ENCODE measurements at regions of chr4 and their contacts with region 1.

Region 1: DNA sequence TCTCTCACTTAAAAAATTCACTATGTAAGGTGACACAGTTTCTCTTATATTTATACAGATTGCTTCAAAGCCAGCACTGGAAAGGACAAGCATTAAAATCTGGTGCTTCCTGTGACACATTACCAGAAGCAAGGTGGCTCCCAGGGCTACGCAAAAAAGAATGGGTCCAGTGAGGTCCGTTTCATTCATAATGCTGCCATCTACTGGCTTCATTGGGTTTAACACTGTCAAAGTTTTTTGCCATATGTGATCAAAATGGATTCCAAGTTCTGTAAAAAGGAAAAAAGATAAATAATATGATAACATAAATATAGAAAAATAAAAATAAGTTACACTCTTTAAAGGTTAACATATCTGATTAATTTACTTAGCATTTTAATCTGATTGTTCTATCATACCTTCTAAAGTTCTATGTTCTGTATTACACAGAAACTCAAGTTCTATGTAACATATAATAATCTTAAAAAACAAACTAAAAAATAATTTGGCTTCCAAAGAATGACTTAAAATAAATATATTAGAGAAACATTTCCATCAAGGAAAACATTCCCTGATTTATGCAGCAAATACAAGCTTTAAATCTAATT is 22.1 kb downstream of the YIPF7 start:
- DNase-seq: peak in 10 of 14 experiments; percentile 0 to 69 (median 16)
- ATAC-seq: peak; percentile 80
- H3K4me3 ChIP-seq: no peak overlapping the region
- H3K4me3 Mint-ChIP-seq: no peak overlapping the region
- H3K27ac ChIP-seq: no peak overlapping the region
- H3K27ac Mint-ChIP-seq: no peak overlapping the region
- H3K4me1 ChIP-seq: no peaks in the 10 kb centered on the region
- H3K4me1 Mint-ChIP-seq: peaks cover 4% of the 10 kb centered on the region
- H3K27me3 ChIP-seq: peaks cover 0 to 7% of the 10 kb centered on the region in 2 experiments
- H3K27me3 Mint-ChIP-seq: no peaks in the 10 kb centered on the region
- CTCF ChIP-seq: peak; percentile 76

Region 2: GRCh38 chr4:42995343-42995944 is 1633.9 kb before region 1 on chr4:
- CTCF ChIA-PET with region 1: no interaction called
- POLR2A ChIA-PET with region 1: no interaction called
- intact Hi-C with region 1: loop called (anchors 10 kb)
- DNase-seq: peak in 1 of 14 experiments; percentile 2
- ATAC-seq: no peak
- H3K4me3 ChIP-seq: no peak overlapping the region
- H3K4me3 Mint-ChIP-seq: no peak overlapping the region
- H3K27ac ChIP-seq: no peak overlapping the region
- H3K27ac Mint-ChIP-seq: no peak overlapping the region
- H3K4me1 ChIP-seq: no peaks in the 10 kb centered on the region
- H3K4me1 Mint-ChIP-seq: no peaks in the 10 kb centered on the region
- H3K27me3 ChIP-seq: no peaks in the 10 kb centered on the region
- H3K27me3 Mint-ChIP-seq: no peaks in the 10 kb centered on the region
- CTCF ChIP-seq: peak; percentile 33

Region 3: GRCh38 chr4:43742083-43742482 is 887.3 kb before region 1 on chr4:
- CTCF ChIA-PET with region 1: no interaction called
- POLR2A ChIA-PET with region 1: no interaction called
- intact Hi-C with region 1: no loop called
- DNase-seq: no peak
- ATAC-seq: no peak
- H3K4me3 ChIP-seq: no peak overlapping the region
- H3K4me3 Mint-ChIP-seq: no peak overlapping the region
- H3K27ac ChIP-seq: no peak overlapping the region
- H3K27ac Mint-ChIP-seq: no peak overlapping the region
- H3K4me1 ChIP-seq: no peaks in the 10 kb centered on the region
- H3K4me1 Mint-ChIP-seq: no peaks in the 10 kb centered on the region
- H3K27me3 ChIP-seq: no peaks in the 10 kb centered on the region
- H3K27me3 Mint-ChIP-seq: no peaks in the 10 kb centered on the region
- CTCF ChIP-seq: no peak

Region 4: GRCh38 chr4:44713125-44713524 is 83.8 kb after region 1 on chr4:
- CTCF ChIA-PET with region 1: no interaction called
- POLR2A ChIA-PET with region 1: no interaction called
- intact Hi-C with region 1: no loop called
- DNase-seq: no peak
- ATAC-seq: no peak
- H3K4me3 ChIP-seq: no peak overlapping the region
- H3K4me3 Mint-ChIP-seq: no peak overlapping the region
- H3K27ac ChIP-seq: no peak overlapping the region
- H3K27ac Mint-ChIP-seq: no peak overlapping the region
- H3K4me1 ChIP-seq: no peaks in the 10 kb centered on the region
- H3K4me1 Mint-ChIP-seq: peaks cover 18% of the 10 kb centered on the region
- H3K27me3 ChIP-seq: no peaks in the 10 kb centered on the region
- H3K27me3 Mint-ChIP-seq: no peaks in the 10 kb centered on the region
- CTCF ChIP-seq: no peak